GM18951 (cell line): ENCODE measurements at regions of chr2 and their contacts with region 1.

Region 1: GRCh38 chr2:216687646-216688045 is 7.7 kb downstream of the IGFBP5 start:
- POLR2A ChIP-seq: no peak

Region 2: DNA sequence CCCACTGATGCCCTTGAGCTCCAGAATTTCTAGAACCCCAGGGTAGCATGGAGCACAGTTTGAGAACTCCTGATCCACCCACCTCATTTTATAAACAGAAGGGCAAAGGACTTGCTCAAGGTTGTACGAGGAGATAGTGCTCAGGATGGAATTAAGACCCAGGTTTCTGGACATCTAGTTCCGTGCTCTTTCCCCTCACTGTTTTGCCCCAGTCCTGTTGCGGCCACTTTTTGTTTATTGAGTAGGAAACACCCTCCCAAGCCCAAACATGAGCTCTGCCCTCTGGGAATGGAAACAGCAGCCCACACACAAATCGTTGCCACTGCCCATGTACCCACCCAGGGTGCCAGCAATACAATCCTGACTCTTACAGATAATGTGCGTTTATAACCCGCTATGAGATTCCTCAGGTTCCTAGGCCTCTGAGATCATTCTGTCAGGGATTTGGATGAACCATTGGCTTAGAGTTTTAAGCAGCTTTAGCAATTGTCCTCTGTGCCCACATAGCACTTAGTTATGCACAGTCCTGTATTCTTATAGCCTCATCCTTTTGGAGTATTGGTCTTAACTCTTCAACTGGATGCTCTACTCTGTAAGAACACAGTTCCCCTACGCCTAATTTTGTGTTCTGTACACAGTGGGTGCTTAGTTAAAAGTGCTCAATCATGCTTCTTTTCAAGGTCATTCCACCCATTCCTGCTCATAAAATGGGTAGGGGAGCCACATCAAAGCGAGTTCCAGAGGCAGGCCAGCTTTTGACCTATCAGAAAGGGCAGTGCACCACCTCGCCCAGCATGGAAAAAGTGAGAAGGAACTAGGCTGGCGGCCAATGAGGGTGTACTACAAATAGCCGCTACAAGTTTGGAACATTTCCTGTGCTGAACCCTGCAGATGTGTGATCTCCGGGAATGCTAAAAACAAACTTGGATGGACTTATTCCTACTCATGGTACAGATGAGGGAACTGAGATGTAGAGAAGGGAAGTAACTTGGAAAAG is 114.8 kb before region 1 on chr2:
- in situ Hi-C with region 1: no loop called
- POLR2A ChIP-seq: no peak

Region 3: DNA sequence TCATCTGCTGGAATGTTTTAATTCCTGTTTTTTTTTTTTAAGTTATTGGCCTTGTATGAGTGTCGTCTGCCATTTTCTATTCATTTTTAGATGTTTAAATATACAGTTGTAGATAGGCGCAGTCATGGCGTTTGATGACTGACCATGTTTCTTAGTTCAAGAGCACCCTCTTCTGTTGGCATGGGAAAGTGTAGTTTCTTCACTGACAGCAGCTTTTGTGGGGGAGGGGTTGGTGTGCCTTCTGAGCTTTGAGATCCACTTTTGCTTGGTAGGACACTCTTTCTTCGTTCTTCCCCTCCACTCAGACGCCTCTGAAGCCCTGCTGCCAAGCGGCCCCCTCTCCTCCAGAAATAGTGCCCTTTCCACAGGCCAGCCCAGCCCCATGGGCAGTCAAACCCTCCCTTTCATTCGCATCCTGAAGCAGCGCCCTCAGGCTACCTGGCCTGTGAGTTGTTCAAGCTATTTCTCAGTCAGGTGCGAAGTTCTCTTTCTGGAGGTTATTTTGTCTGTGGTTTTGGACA is 823.2 kb after region 1 on chr2:
- in situ Hi-C with region 1: loop called (anchors 10 kb)
- POLR2A ChIP-seq: no peak